ENCODE measurements at regions of chr2 and their contacts with region 1.

Region 1: DNA sequence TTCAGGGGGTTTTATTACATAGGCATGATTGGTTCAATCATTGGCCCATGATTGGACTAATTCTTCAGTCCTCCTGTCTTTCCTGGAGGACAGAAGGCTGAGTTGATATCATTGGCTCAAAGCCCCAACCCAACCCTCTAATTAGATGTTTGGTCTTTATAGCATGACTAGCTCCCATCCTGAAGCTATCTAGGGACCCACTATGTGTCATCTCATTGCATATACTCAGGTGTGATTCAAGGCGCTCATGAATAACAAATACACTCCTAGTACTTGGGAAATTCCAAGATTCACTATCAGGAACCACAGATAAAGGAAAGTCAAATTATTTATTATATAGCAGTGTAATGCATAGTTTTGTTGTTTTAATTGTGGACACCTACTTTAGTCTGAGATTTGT is 24.9 kb upstream of the NBEAL1 start:
- DNase-seq: no peak
- ATAC-seq: no peak
- H3K4me3 ChIP-seq: no peak overlapping the region
- H3K4me3 Mint-ChIP-seq: no peak overlapping the region
- H3K27ac ChIP-seq: no peak overlapping the region
- H3K27ac Mint-ChIP-seq: no peak overlapping the region
- H3K4me1 ChIP-seq: no peaks in the 10 kb centered on the region
- H3K4me1 Mint-ChIP-seq: no peaks in the 10 kb centered on the region
- H3K27me3 ChIP-seq: no peaks in the 10 kb centered on the region
- H3K27me3 Mint-ChIP-seq: peaks cover 0 to 3% of the 10 kb centered on the region in 2 donors

Region 2: GRCh38 chr2:202932425-202933138 is 57.2 kb before region 1 on chr2:
- CTCF ChIA-PET with region 1: no interaction called
- POLR2A ChIA-PET with region 1: interaction called in 1 of 2 experiments, 11 read pairs
- DNase-seq: no peak
- ATAC-seq: no peak
- H3K4me3 ChIP-seq: no peak overlapping the region
- H3K4me3 Mint-ChIP-seq: no peak overlapping the region
- H3K27ac ChIP-seq: no peak overlapping the region
- H3K27ac Mint-ChIP-seq: no peak overlapping the region
- H3K4me1 ChIP-seq: no peaks in the 10 kb centered on the region
- H3K4me1 Mint-ChIP-seq: peaks cover 0 to 13% (median 3%) of the 10 kb centered on the region in 3 donors
- H3K27me3 ChIP-seq: no peaks in the 10 kb centered on the region
- H3K27me3 Mint-ChIP-seq: no peaks in the 10 kb centered on the region

Region 3: GRCh38 chr2:203002054-203002821 is 12.5 kb after region 1 on chr2:
- CTCF ChIA-PET with region 1: no interaction called
- POLR2A ChIA-PET with region 1: interaction called in 1 of 2 experiments, 12 read pairs
- DNase-seq: no peak
- ATAC-seq: no peak
- H3K4me3 ChIP-seq: no peak overlapping the region
- H3K4me3 Mint-ChIP-seq: no peak overlapping the region
- H3K27ac ChIP-seq: no peak overlapping the region
- H3K27ac Mint-ChIP-seq: no peak overlapping the region
- H3K4me1 ChIP-seq: no peaks in the 10 kb centered on the region
- H3K4me1 Mint-ChIP-seq: no peaks in the 10 kb centered on the region
- H3K27me3 ChIP-seq: no peaks in the 10 kb centered on the region
- H3K27me3 Mint-ChIP-seq: peaks cover 0 to 9% of the 10 kb centered on the region in 2 donors

Region 4: DNA sequence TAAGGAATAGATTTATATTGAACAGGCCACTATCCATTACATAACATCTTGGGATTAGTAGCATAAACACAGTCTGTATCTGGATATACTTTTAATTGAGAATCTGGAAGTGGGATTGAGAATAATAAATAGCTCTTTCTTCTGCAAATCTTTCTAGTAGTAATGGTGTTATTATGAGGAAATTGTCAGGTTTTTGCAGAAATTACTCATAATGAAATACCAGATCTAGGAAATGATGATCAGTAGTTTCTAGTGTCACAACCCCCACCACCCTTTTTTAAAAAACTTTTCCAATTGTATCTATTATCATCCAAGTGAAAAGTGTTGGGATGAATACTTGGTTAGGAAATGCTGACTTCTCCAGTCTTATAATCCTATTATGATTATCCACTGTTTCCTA is 43.6 kb after region 1 on chr2:
- CTCF ChIA-PET with region 1: no interaction called
- POLR2A ChIA-PET with region 1: no interaction called
- DNase-seq: no peak
- ATAC-seq: no peak
- H3K4me3 ChIP-seq: no peak overlapping the region
- H3K4me3 Mint-ChIP-seq: no peak overlapping the region
- H3K27ac ChIP-seq: no peak overlapping the region
- H3K27ac Mint-ChIP-seq: no peak overlapping the region
- H3K4me1 ChIP-seq: no peaks in the 10 kb centered on the region
- H3K4me1 Mint-ChIP-seq: peaks cover 0 to 8% (median 2%) of the 10 kb centered on the region in 3 donors
- H3K27me3 ChIP-seq: no peaks in the 10 kb centered on the region
- H3K27me3 Mint-ChIP-seq: no peaks in the 10 kb centered on the region

Region 5: DNA sequence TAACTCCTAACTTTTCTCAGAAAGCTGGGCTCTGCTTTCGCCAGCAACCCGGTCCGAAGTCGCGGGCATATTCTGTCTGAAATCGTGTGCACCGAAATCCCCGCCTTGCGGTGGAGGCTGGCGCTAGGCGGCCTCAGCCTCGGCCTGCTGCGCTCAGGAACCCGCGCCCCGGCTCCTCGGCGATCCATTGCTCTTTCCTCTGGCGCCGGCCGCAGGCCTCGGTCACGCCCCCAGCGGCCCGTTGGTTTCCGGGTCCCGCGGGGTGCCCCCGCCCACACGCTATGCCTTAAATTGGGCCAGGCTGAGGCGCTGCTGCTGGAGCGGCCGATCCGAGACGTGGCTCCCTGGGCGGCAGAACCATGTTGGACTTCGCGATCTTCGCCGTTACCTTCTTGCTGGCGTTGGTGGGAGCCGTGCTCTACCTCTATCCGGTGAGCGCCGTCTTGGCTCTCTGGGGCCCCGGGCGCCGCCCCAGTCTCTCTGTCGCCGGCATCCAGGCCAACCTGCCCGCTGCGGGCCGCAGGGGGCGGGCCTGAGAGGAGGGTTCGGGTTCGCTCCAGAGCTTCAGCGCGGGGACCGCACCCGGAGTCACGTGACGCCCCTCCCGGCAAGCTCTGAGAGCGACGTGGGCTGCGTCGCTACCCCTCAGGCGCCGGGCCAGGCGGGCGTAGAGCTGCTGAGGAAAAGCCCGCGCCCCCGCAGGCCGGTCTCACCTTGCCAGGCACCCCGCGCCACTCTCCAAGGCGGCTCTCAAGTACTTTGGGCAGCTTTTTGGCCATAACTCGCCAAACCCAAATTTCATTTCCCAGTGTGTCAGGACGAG is 249.2 kb after region 1 on chr2 and contains the start of gene CYP20A1:
- CTCF ChIA-PET with region 1: no interaction called
- POLR2A ChIA-PET with region 1: no interaction called
- DNase-seq: peak; percentile 92 to 99 (median 96)
- ATAC-seq: peak; percentile 85 to 91 (median 88)
- H3K4me3 ChIP-seq: peak within 1 kb of the TSS; percentile 90 to 91
- H3K4me3 Mint-ChIP-seq: peak within 1 kb of the TSS; percentile 89 to 100 (median 98)
- H3K27ac ChIP-seq: peak within 1 kb of the TSS; percentile 97
- H3K27ac Mint-ChIP-seq: peak within 1 kb of the TSS; percentile 98 to 100
- H3K4me1 ChIP-seq: peaks cover 13 to 22% of the 10 kb centered on the region in 2 experiments
- H3K4me1 Mint-ChIP-seq: peaks cover 33 to 42% (median 35%) of the 10 kb centered on the region in 3 donors
- H3K27me3 ChIP-seq: no peaks in the 10 kb centered on the region
- H3K27me3 Mint-ChIP-seq: no peaks in the 10 kb centered on the region
- total RNA-seq, gene CYP20A1: 33.5 to 38.5 (median 36.3) TPM